ENCODE measurements at regions of chrX and their contacts with region 1.

Region 1: GRCh38 chrX:136028251-136028984 is 43.2 kb downstream of the SLC9A6 start:
- DNase-seq: no peak
- H3K4me3 ChIP-seq: no peak overlapping the region
- H3K27ac ChIP-seq: no peak overlapping the region
- H3K27me3 ChIP-seq: no peaks in the 10 kb centered on the region
- CTCF ChIP-seq: peak; percentile 57

Region 2: DNA sequence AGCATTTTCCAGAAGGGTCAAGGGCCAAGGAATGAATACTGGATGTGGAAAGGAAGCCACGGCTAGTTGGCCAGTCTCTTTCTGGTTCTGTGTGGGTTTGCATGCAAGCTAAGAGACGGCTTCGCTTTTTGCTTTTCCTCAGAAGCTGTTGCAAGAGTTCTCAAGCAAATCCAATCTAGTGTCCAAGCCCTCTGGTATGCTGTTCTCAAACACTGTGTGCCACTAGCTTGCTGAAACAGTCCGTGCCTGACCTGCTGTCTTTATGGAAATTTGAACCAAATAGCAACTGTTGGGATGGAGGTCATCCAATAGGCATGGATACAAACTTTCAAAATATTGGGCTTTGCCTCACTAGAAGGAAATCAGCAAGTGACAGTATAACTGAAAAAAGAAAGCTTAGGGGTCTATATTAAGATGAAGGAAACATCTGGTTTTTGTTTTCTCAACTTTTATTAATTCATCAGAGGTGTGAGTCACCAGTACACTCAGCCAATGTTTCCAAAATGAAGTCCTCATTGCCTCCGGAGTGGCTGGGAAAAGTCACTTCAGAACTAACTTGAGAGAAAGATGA is 27.3 kb after region 1 on chrX:
- CTCF ChIA-PET with region 1: interaction called, 10 read pairs
- POLR2A ChIA-PET with region 1: no interaction called
- DNase-seq: peak; percentile 51
- H3K4me3 ChIP-seq: peak overlapping the region; percentile 31
- H3K27ac ChIP-seq: peak overlapping the region; percentile 80
- H3K27me3 ChIP-seq: no peaks in the 10 kb centered on the region
- CTCF ChIP-seq: no peak

Region 3: DNA sequence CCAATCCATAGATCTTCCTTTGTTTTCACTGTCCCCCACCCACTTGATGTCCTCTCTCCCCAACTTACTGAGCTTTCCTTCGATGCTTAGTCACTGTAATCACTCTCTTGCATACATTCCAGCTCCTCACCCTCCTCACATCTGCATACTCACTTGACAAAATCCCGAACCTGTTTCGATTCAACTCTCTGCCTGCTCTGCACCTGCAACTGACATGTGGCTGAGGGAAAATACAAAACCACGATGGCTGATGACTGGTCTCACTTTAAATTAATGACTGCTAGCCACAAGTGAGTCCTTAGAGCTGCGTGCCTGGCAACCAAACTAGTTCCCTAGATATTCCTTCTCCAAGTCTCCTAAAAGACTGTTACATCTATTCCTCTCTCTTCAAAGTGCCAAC is 48.5 kb after region 1 on chrX:
- CTCF ChIA-PET with region 1: no interaction called
- POLR2A ChIA-PET with region 1: no interaction called
- DNase-seq: no peak
- H3K4me3 ChIP-seq: no peak overlapping the region
- H3K27ac ChIP-seq: no peak overlapping the region
- H3K27me3 ChIP-seq: peaks cover 5% of the 10 kb centered on the region
- CTCF ChIP-seq: no peak

Region 4: GRCh38 chrX:136168929-136169735 is 140.7 kb after region 1 on chrX:
- CTCF ChIA-PET with region 1: interaction called, 93 read pairs
- POLR2A ChIA-PET with region 1: interaction called, 3 read pairs
- DNase-seq: peak; percentile 90
- H3K4me3 ChIP-seq: no peak overlapping the region
- H3K27ac ChIP-seq: peak overlapping the region; percentile 81
- H3K27me3 ChIP-seq: no peaks in the 10 kb centered on the region
- CTCF ChIP-seq: 0 out of 2 replicates have a peak, but pooled peaks have one; percentile 5

Region 5: GRCh38 chrX:136209016-136209738 is 180.8 kb after region 1 on chrX:
- CTCF ChIA-PET with region 1: interaction called, 105 read pairs
- POLR2A ChIA-PET with region 1: no interaction called
- DNase-seq: no peak
- H3K4me3 ChIP-seq: no peak overlapping the region
- H3K27ac ChIP-seq: no peak overlapping the region
- H3K27me3 ChIP-seq: no peaks in the 10 kb centered on the region
- CTCF ChIP-seq: peak; percentile 60

Region 6: GRCh38 chrX:136417806-136418205 is 389.4 kb after region 1 on chrX:
- CTCF ChIA-PET with region 1: no interaction called
- POLR2A ChIA-PET with region 1: no interaction called
- DNase-seq: no peak
- H3K4me3 ChIP-seq: no peak overlapping the region
- H3K27ac ChIP-seq: no peak overlapping the region
- H3K27me3 ChIP-seq: no peaks in the 10 kb centered on the region
- CTCF ChIP-seq: no peak

Region 7: GRCh38 chrX:136577552-136577951 is 549.1 kb after region 1 on chrX:
- CTCF ChIA-PET with region 1: interaction called, 13 read pairs
- POLR2A ChIA-PET with region 1: no interaction called
- DNase-seq: peak; percentile 1
- H3K4me3 ChIP-seq: no peak overlapping the region
- H3K27ac ChIP-seq: no peak overlapping the region
- H3K27me3 ChIP-seq: no peaks in the 10 kb centered on the region
- CTCF ChIP-seq: peak; percentile 79